Spleen (tissue), 13 donors: ENCODE measurements at regions of chr19 and their contacts with region 1.

Region 1: GRCh38 chr19:44093931-44094765 is at the start of gene ZNF224:
- DNase-seq: peak; percentile 95
- H3K4me3 ChIP-seq: peak within 1 kb of the TSS; percentile 70 to 94 (median 88)
- H3K27ac ChIP-seq: peak within 1 kb of the TSS; percentile 69 to 88 (median 82)
- H3K4me1 ChIP-seq: peaks cover 8 to 31% (median 24%) of the 10 kb centered on the region in 6 donors
- H3K27me3 ChIP-seq: no peaks in the 10 kb centered on the region
- CTCF ChIP-seq: no peak
- POLR2A ChIP-seq: no peak
- total RNA-seq, gene ZNF224: 39.4 to 61.8 (median 49.8) TPM

Region 2: GRCh38 chr19:43976732-43977131 is 117.4 kb before region 1 on chr19:
- intact Hi-C with region 1: no loop called
- DNase-seq: no peak
- H3K4me3 ChIP-seq: no peak overlapping the region
- H3K27ac ChIP-seq: no peak overlapping the region
- H3K4me1 ChIP-seq: no peaks in the 10 kb centered on the region
- H3K27me3 ChIP-seq: no peaks in the 10 kb centered on the region
- CTCF ChIP-seq: no peak
- POLR2A ChIP-seq: no peak

Region 3: DNA sequence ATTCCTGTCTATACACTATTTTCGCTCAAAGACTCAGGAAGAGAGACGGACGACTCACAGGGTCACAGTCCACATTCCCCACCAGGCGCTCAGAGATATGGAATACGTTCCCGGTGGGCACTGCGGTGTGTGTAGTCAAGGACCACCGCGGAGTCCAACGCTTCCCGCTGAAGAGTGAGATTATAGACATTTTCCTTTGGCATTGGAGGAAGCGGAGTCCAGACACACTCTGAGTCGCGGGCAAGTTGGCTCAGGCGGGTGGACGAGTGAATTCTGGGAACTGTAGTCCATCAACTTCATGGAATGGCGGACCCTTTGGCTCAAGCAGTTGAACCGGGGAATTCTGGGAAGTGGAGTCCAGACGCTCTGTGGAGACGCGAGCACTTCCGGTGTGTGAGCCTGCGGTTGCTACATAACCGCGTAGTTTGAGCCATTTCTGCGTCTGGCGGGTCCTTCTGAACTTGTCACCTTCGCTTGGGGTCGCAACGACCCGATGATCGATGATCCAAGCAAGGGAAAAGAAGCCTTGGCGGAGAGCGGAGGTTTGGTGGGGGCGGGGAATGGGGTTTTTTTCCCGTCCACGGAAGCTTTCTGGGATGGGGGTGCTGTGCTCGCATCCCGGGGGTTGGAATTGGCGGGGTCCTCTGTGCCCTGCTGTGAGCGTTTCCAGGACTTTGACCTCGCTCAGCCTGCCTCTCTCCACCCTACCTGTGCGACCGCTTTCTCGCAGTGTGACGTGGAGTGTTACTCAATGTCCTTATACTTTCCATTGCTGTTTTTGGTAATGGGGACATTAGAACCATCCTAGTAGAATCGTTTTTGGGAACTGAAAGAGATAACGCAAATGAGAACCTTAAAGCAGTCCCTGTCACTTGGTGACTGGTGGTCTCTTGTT is 91.3 kb before region 1 on chr19 and contains the start of gene ZNF230:
- intact Hi-C with region 1: loop called (anchors 10 kb)
- DNase-seq: peak; percentile 95
- H3K4me3 ChIP-seq: peak within 1 kb of the TSS; percentile 62 to 92 (median 84)
- H3K27ac ChIP-seq: peak within 1 kb of the TSS; percentile 74 to 92 (median 82)
- H3K4me1 ChIP-seq: peaks cover 8 to 42% (median 20%) of the 10 kb centered on the region in 6 donors
- H3K27me3 ChIP-seq: no peaks in the 10 kb centered on the region
- CTCF ChIP-seq: no peak
- POLR2A ChIP-seq: no peak
- total RNA-seq, gene ZNF230: 7.9 to 15.2 (median 8.9) TPM